Activated naive CD4-positive, alpha-beta T cell treated with anti-CD3 and anti-CD28 coated beads, Interleukin-2, amount 10 ng/mL, durations not matched to agents 7 days and 5 days (primary cell): ENCODE measurements at regions of chr2 and their contacts with region 1.

Region 1: DNA sequence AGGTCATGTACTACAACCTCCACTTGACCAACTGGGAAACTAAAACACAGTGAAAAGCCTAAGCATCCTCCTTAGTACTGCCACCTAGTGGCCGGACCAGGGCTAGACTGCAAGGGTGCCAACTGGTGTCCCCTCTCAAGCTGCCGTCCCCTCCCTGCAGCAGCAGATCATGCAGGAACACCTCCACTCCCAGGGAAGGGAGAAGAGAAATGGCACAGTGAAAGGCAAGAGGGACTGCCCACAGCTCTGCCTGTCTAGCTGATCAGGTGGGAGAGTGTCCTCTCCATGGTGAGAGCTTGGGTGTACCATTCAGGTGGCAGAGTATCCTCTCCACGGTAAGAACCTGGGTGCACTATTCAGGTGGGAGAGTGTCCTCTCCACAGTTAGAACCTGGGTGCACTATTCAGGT is 78.1 kb downstream of the AAK1 start:
- DNase-seq: peak; percentile 79
- H3K4me3 Mint-ChIP-seq: no peak overlapping the region
- H3K27ac Mint-ChIP-seq: no peak overlapping the region
- H3K4me1 Mint-ChIP-seq: peaks cover 56% of the 10 kb centered on the region
- H3K27me3 Mint-ChIP-seq: no peaks in the 10 kb centered on the region

Region 2: DNA sequence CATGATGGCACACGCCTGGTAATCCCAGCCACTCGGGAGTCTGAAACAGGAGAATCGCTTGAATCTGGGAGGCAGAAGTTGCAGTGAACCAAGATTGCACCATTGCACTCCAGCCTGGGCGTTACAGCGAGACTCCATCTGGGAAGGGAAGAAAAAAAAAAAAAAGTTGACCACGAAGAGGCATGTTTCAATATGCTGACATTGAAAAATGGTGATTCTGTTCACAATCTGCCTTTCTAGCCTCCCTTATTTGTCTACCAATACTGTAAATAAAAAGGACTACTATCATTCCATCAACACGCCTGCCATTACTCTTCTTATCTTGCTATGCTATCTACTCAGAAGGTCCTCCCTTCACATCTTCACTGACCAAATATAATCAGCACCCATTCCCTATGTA is 196.8 kb before region 1 on chr2:
- CTCF ChIA-PET with region 1: no interaction called
- DNase-seq: no peak
- H3K4me3 Mint-ChIP-seq: no peak overlapping the region
- H3K27ac Mint-ChIP-seq: no peak overlapping the region
- H3K4me1 Mint-ChIP-seq: no peaks in the 10 kb centered on the region
- H3K27me3 Mint-ChIP-seq: no peaks in the 10 kb centered on the region

Region 3: GRCh38 chr2:69436938-69437750 is 128.3 kb before region 1 on chr2 and contains the start of gene NFU1:
- CTCF ChIA-PET with region 1: interaction called, 14 read pairs
- DNase-seq: peak; percentile 88
- H3K4me3 Mint-ChIP-seq: peak within 1 kb of the TSS; percentile 95
- H3K27ac Mint-ChIP-seq: peak within 1 kb of the TSS; percentile 99
- H3K4me1 Mint-ChIP-seq: peaks cover 32% of the 10 kb centered on the region
- H3K27me3 Mint-ChIP-seq: no peaks in the 10 kb centered on the region

Region 4: GRCh38 chr2:69581774-69582581 is 16.5 kb after region 1 on chr2:
- CTCF ChIA-PET with region 1: interaction called, 92 read pairs
- DNase-seq: peak; percentile 28
- H3K4me3 Mint-ChIP-seq: no peak overlapping the region
- H3K27ac Mint-ChIP-seq: peak overlapping the region; percentile 53
- H3K4me1 Mint-ChIP-seq: peaks cover 75% of the 10 kb centered on the region
- H3K27me3 Mint-ChIP-seq: no peaks in the 10 kb centered on the region

Region 5: DNA sequence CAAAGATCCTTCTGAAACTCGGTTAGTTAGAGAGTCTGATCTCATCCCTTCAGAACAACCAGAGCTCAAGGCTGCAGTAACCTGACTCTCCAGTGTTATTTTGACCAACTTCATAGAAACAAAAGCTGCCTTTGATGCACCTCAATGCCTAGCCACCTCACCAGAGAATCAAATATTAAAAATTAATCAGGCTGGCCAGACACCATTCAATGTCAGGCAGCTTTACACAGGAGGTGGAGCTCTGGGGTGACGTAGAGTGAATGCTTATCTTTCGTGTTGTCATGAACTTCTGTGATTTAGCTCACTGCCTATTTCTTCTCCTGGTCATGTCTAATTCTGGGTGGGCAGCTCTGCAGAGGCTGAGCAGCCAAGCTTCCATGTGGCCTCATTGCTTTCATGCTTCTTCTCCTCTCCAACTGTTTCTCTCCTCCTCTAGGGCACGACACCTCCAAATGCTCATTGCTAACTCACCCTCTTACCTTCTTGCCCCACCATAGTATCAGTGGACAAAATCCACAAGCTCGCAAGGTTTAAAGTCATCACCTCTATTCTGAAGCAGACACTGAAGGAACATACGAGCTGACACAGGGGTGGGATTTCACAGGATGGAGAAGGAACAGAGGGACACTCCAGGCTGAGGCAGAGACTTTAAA is 38.7 kb after region 1 on chr2:
- CTCF ChIA-PET with region 1: interaction called, 14 read pairs
- DNase-seq: no peak
- H3K4me3 Mint-ChIP-seq: no peak overlapping the region
- H3K27ac Mint-ChIP-seq: no peak overlapping the region
- H3K4me1 Mint-ChIP-seq: peaks cover 72% of the 10 kb centered on the region
- H3K27me3 Mint-ChIP-seq: no peaks in the 10 kb centered on the region

Region 6: DNA sequence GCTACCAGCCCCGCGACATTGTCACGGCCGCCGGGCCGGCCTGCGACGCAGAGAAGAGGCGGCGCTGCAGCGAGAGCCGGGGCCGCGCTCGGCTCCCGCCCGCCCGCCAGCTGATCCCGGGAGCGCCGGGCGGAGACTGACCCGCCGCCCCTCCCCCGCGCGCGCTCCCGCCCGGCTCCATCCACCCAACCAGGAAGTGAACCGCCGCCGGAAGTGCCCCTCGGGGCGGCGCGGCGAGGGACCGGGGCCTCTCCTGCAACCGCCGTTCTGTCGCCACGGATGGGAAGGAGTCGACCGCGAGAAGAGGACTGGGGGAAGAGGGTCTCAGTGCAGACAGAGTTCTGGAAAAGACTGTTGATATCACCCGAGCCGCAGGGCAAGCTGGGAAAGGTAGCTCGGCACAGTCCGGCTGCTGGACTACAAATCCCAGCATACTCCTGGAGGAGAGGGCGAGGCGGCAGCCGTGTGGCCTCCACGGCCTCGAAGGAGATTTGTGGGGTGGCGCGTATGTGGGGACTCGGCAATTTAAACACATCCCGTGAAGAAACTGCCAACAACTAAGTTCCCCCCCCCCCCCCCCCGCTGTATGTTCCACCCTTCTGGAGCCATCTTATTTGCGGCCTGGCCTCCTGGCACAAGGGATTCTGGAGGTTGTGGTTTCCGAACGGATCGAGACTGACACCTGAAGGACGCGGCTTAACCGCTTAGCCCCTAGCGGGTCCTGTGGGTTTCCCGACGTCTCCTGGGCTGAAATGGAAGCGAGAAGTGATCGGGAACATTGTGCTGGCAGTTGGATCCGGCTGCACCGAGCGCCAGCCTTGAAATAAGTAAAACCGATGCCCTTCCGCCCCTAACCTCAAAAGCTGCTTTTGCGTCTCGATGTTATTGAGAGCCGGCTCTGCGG is 78.4 kb after region 1 on chr2 and contains the start of gene AAK1:
- CTCF ChIA-PET with region 1: interaction called, 13 read pairs
- DNase-seq: peak; percentile 89
- H3K4me3 Mint-ChIP-seq: peak within 1 kb of the TSS; percentile 90
- H3K27ac Mint-ChIP-seq: peak within 1 kb of the TSS; percentile 97
- H3K4me1 Mint-ChIP-seq: peaks cover 62% of the 10 kb centered on the region
- H3K27me3 Mint-ChIP-seq: no peaks in the 10 kb centered on the region

Region 7: GRCh38 chr2:69716555-69717114 is 151.2 kb after region 1 on chr2:
- CTCF ChIA-PET with region 1: interaction called, 25 read pairs
- DNase-seq: no peak
- H3K4me3 Mint-ChIP-seq: no peak overlapping the region
- H3K27ac Mint-ChIP-seq: no peak overlapping the region
- H3K4me1 Mint-ChIP-seq: peaks cover 9% of the 10 kb centered on the region
- H3K27me3 Mint-ChIP-seq: peaks cover 8% of the 10 kb centered on the region